SK-N-SH (cell line): ENCODE measurements at regions of chr2 and their contacts with region 1.

Region 1: DNA sequence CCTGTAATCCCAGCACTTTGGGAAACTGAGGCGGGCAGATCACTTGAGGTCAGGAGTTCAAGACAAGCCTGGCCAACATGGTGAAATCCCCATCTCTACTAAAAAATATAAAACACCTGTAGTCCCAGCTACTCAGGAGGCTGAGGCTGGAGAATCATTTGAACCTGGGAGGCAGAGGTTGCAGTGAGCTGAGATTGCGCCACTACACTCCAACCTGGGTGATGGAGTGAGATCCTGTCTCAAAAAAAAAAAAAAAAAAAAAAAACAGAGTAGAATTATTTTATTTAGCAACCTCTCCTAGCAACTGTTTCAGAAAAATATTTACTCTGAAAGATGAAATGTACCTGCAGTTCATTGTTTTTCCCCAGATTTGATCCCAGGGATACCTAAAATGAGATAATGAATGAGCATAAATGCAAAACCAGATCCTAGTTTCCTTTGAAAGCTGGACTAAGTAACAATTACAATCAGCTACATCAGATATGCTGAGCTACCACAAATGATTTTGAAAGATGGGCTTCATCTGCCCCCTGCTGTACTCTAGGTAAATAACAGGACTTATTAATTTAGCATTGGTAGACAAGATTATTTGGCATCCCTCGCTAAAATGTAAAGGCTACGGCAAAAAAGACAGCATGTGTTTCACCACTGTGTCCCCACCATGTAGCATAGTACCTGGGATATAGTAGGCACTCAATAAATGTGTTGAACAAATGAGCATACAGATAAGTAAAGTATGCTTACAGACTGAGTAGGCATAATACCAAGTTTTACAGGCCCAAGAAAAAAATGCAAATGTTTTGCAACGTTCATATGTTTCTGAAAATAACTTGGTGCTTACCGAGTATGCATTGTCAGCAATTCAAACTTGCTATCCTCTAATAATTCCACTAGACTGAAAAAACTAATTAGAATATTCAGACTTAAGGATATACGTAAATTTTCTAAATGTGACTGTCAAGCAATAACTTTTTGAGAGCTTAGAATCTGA is 102.5 kb downstream of the ATL2 start:
- DNase-seq: peak; percentile 81
- H3K4me3 ChIP-seq: no peak overlapping the region
- H3K27ac ChIP-seq: 0 out of 4 replicates have a peak overlapping the region, but pooled peaks of 1 of the 2 experiments have one; percentile 18
- H3K4me1 ChIP-seq: no peaks in the 10 kb centered on the region; a peak in 1 of 4 replicates
- H3K27me3 ChIP-seq: no peaks in the 10 kb centered on the region
- CTCF ChIP-seq: peak; percentile 86
- EP300 ChIP-seq: peak in 1 of 2 experiments; percentile 50; a peak in 1 of 4 replicates
- RAD21 ChIP-seq: peak; percentile 100

Region 2: DNA sequence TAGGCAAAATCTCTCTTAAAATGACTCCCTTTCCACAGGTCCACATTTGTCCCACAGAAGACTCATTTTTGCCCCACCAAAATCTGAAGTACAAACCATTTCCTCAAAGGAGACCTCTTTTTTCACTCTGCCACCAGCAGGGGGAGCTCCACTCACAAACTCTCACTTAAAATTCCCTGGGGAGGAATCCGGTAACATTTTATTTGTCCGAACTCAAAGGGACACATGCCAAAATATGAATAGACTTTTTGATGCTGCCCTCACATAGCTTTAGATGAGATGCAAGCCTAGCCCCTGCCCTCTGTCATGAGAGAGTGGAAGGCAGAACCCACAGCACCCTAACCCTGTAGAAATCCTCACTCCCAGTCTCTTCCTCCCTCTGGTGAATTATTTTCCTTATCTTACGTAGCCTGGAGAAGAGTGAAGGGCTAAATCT is 292.4 kb before region 1 on chr2:
- CTCF ChIA-PET with region 1: interaction called, 59 read pairs
- POLR2A ChIA-PET with region 1: no interaction called
- DNase-seq: peak; percentile 60
- H3K4me3 ChIP-seq: peak overlapping the region; percentile 2 to 25; a peak in 1 of 4 replicates
- H3K27ac ChIP-seq: 0 out of 4 replicates have a peak overlapping the region, but pooled peaks of 1 of the 2 experiments have one; percentile 2
- H3K4me1 ChIP-seq: peaks cover 0 to 3% of the 10 kb centered on the region in 2 experiments; a peak in 2 of 4 replicates
- H3K27me3 ChIP-seq: no peaks in the 10 kb centered on the region
- CTCF ChIP-seq: peak; percentile 99
- EP300 ChIP-seq: no peak
- RAD21 ChIP-seq: peak; percentile 78

Region 3: GRCh38 chr2:38106405-38107094 is 168.0 kb before region 1 on chr2:
- CTCF ChIA-PET with region 1: interaction called, 20 read pairs
- POLR2A ChIA-PET with region 1: no interaction called
- DNase-seq: no peak
- H3K4me3 ChIP-seq: no peak overlapping the region
- H3K27ac ChIP-seq: peak overlapping the region; percentile 51 to 99
- H3K4me1 ChIP-seq: peaks cover 5 to 51% of the 10 kb centered on the region in 2 experiments; a peak in 3 of 4 replicates
- H3K27me3 ChIP-seq: no peaks in the 10 kb centered on the region
- CTCF ChIP-seq: no peak
- EP300 ChIP-seq: no peak
- RAD21 ChIP-seq: no peak

Region 4: DNA sequence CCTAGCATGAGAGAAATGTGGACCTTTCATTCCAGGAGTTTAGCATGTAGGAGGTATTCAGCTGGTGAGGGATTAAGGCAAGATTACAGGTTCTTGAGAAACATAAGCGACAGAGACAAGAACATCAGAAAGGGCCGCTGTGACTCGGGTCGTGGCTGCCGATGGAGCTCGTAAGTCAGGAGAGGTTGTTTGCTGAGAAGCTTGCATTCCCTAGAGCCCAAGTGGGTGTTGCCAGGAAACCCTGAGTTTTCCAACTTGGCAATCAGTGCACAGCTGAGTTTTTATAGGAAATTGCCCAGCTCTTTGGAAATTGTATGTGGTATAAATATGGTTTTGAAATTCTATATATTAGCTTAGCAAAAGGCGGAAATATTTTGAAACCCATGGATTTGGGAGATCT is 152.2 kb before region 1 on chr2:
- CTCF ChIA-PET with region 1: interaction called, 68 read pairs
- POLR2A ChIA-PET with region 1: no interaction called
- DNase-seq: no peak
- H3K4me3 ChIP-seq: no peak overlapping the region
- H3K27ac ChIP-seq: no peak overlapping the region
- H3K4me1 ChIP-seq: peaks cover 0 to 14% of the 10 kb centered on the region in 2 experiments; a peak in 2 of 4 replicates
- H3K27me3 ChIP-seq: no peaks in the 10 kb centered on the region
- CTCF ChIP-seq: no peak
- EP300 ChIP-seq: no peak
- RAD21 ChIP-seq: no peak

Region 5: DNA sequence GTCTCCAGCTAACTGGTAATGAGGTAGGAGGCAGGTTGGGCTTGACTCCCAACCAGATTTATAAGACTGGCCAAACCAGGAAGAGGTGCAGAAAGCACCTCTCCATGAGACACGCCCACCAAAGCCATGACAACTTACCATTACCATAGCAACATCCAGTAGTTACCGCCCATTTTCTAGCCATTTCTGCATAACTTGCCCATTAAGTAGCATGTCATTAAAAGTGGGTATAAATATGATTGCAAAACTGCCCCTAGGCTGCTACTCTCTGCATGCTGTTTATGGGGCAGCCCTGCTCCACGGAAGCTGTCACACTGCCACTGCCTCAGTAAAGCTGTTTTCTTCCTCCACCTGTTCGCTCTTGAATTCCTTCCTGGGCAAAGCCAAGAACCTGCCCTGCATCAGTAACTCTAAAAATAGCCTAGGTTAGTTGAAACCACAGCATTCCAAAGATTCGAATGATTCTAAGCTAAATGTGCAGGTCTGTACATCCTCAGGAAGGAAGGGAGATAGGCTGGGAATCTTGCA is 29.4 kb before region 1 on chr2:
- CTCF ChIA-PET with region 1: interaction called, 10 read pairs
- POLR2A ChIA-PET with region 1: no interaction called
- DNase-seq: no peak
- H3K4me3 ChIP-seq: no peak overlapping the region
- H3K27ac ChIP-seq: peak overlapping the region in 1 of 2 experiments; percentile 56; a peak in 1 of 4 replicates
- H3K4me1 ChIP-seq: peaks cover 0 to 17% of the 10 kb centered on the region in 2 experiments; a peak in 2 of 4 replicates
- H3K27me3 ChIP-seq: no peaks in the 10 kb centered on the region
- CTCF ChIP-seq: no peak
- EP300 ChIP-seq: no peak
- RAD21 ChIP-seq: no peak

Region 6: GRCh38 chr2:38892819-38893218 is 618.2 kb after region 1 on chr2:
- CTCF ChIA-PET with region 1: no interaction called
- POLR2A ChIA-PET with region 1: no interaction called
- DNase-seq: no peak
- H3K4me3 ChIP-seq: no peak overlapping the region
- H3K27ac ChIP-seq: no peak overlapping the region
- H3K4me1 ChIP-seq: no peaks in the 10 kb centered on the region
- H3K27me3 ChIP-seq: no peaks in the 10 kb centered on the region
- CTCF ChIP-seq: no peak
- EP300 ChIP-seq: no peak
- RAD21 ChIP-seq: no peak